Psoas muscle (tissue), 8 donors: ENCODE measurements at regions of chr22 and their contacts with region 1.

Region 1: GRCh38 chr22:32144496-32145274 is 14.4 kb downstream of the C22orf42 start:
- DNase-seq: no peak
- ATAC-seq: no peak
- H3K4me3 ChIP-seq: no peak overlapping the region
- H3K27ac ChIP-seq: no peak overlapping the region
- H3K4me1 ChIP-seq: no peaks in the 10 kb centered on the region
- H3K27me3 ChIP-seq: no peaks in the 10 kb centered on the region
- CTCF ChIP-seq: no peak

Region 2: DNA sequence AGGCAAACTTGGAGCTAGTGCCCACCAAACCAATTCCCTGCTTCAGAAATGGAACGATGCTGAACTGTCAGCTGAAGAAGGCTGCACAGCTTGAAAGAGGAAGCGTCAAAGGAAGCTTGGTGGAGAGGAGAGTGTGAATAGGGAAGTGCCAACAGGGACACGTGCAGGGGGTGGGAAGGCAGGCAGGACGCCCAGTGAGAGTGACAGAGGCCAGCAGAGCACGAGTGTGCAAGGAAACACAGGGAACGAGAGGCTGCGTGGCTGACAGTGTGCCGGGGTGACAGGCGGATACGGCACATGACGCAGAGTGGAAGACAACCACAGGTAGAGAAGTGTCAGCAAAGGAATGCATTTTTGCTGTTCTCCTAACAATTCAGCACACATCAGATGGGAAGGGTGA is 1579.2 kb after region 1 on chr22:
- intact Hi-C with region 1: loop called in 1 of 2 experiments (anchors 5 kb)
- DNase-seq: no peak
- ATAC-seq: no peak
- H3K4me3 ChIP-seq: no peak overlapping the region
- H3K27ac ChIP-seq: no peak overlapping the region
- H3K4me1 ChIP-seq: peaks cover 29% of the 10 kb centered on the region
- H3K27me3 ChIP-seq: no peaks in the 10 kb centered on the region
- CTCF ChIP-seq: no peak